ENCODE measurements at regions of chr12 and their contacts with region 1.

Region 1: DNA sequence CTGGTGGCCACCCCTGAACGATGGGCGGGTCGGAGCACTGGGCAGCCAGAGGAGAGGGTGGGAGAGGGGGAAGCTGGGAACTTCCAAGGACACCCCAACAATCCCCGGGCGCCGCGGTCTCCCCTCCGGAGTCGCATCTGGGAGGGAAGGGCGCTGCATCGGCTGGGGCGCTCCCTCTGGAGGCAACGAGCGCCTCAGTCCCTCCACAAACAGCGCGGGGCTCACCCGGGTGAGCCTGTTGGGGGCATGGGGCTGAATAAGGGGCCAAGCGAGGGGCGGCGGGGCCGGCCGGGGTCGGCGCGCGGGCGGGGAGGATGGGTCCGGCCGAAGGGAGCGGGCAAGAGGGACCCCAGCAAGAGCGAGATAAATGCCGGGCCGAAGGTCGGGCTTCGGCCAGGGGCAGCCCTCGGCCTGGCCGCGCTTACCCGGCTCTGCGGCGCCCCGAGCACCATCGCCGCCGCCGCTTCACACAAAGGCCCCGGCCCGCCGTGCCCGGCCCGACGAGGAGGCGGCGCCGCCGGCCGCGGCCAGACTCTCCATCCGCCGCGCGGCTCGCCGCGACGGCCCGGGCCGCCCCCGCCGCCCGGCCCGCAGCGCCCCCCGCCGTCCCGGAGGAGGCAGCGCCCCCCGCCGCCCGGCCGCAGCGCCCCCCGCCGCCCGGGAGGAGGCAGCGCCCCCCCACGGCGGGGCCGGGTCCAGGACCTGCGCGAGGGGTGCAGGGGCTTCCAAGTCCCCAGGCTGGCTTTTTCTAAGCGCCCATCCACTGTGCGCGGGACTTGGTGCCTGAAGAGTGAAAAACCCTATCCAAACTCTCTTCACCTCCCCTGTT is at the start of gene ZBTB39:
- DNase-seq: peak; percentile 92
- H3K4me3 ChIP-seq: peak within 1 kb of the TSS; percentile 64 to 94 (median 78)
- H3K27ac ChIP-seq: peak within 1 kb of the TSS; percentile 80 to 92 (median 88)
- H3K4me1 ChIP-seq: peaks cover 30 to 78% (median 63%) of the 10 kb centered on the region in 6 donors
- H3K27me3 ChIP-seq: no peaks in the 10 kb centered on the region
- CTCF ChIP-seq: peak in 10 of 11 experiments; percentile 17 to 75 (median 54)
- POLR2A ChIP-seq: no peak
- total RNA-seq, gene ZBTB39: 8.7 to 15.7 (median 11.9) TPM

Region 2: GRCh38 chr12:57063991-57064685 is 57.9 kb after region 1 on chr12:
- intact Hi-C with region 1: loop called (anchors 5 kb)
- DNase-seq: no peak
- H3K4me3 ChIP-seq: peak overlapping the region in 1 of 8 donors; percentile 1
- H3K27ac ChIP-seq: peak overlapping the region; percentile 57 to 85 (median 78)
- H3K4me1 ChIP-seq: peaks cover 8 to 48% (median 23%) of the 10 kb centered on the region in 6 donors
- H3K27me3 ChIP-seq: no peaks in the 10 kb centered on the region
- CTCF ChIP-seq: no peak
- POLR2A ChIP-seq: no peak

Region 3: DNA sequence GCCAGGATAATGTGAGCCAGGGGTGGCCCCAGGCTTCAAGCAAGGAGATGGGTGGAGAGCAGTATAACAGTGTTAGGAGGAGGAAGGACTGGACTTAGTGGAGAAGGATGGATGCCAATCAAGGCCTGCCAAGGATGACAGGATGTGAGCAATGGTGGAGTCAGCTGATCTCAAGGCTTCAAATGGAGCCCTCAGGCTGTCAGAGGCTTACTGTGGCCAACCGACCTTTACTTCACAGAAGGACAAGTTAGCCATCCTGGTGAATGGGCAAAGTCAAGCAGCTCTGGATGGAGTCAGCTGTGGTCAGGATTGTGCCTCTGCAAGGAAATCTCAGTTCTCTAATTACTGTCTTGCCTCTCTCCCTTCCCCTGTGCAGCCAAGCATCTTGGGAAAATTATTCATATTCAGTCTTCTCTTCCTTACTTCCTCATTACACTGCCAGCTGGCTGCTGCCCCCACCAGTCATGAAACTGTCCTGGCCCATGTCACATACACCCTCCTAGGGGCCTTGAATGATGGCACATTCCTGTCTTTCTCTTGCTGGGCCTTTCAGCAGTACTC is 112.6 kb after region 1 on chr12:
- intact Hi-C with region 1: loop called (anchors 5 kb)
- DNase-seq: peak; percentile 68
- H3K4me3 ChIP-seq: no peak overlapping the region
- H3K27ac ChIP-seq: peak overlapping the region in 4 of 8 donors; percentile 26 to 63 (median 50)
- H3K4me1 ChIP-seq: peaks cover 0 to 16% (median 7%) of the 10 kb centered on the region in 6 donors
- H3K27me3 ChIP-seq: no peaks in the 10 kb centered on the region
- CTCF ChIP-seq: no peak
- POLR2A ChIP-seq: no peak

Measured in spleen (tissue), 13 donors.